ENCODE measurements at regions of chr4 and their contacts with region 1.

Region 1: DNA sequence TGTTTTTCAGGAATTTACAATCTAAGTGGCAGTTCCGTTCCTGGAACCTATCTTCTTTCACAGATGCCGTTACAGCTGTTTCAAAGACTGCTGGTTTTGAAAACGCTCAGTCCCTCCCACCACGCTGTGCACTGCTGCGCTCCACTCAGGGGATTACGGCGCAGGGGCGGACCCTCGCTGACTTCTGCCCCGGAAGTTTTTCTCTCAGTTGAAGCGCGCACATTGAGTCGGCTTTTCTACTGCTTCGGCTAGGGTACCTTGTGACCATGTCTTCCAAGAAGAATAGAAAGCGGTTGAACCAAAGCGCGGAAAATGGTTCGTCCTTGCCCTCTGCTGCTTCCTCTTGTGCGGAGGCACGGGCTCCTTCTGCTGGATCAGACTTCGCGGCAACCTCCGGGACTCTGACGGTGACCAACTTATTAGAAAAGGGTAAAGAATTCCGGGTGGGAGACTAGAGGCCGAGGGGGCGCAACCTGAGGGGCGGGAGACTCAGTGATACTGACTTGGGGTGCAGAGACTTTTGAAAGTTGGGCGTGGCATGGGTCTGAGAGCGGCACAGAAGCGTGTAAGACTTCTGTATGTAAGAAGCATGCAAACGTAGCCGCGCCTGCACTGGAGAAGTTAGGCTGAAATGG is 597 bp upstream of the NUDT6 start:
- DNase-seq: peak; percentile 60 to 87 (median 82)
- ATAC-seq: peak; percentile 98
- H3K4me3 ChIP-seq: peak overlapping the region; percentile 97
- H3K4me3 Mint-ChIP-seq: peak overlapping the region in 6 of 10 donors; percentile 98 to 100 (median 98)
- H3K27ac ChIP-seq: peak overlapping the region; percentile 68
- H3K27ac Mint-ChIP-seq: peak overlapping the region in 8 of 9 donors; percentile 92 to 98 (median 96)
- H3K4me1 ChIP-seq: peaks cover 11 to 12% of the 10 kb centered on the region in 2 donors
- H3K4me1 Mint-ChIP-seq: peaks cover 0 to 33% (median 7%) of the 10 kb centered on the region in 7 donors
- H3K27me3 ChIP-seq: no peaks in the 10 kb centered on the region
- H3K27me3 Mint-ChIP-seq: no peaks in the 10 kb centered on the region

Region 2: GRCh38 chr4:121696581-121697461 is 1226.2 kb before region 1 on chr4 and contains the start of gene ANXA5:
- CTCF ChIA-PET with region 1: no interaction called
- POLR2A ChIA-PET with region 1: no interaction called
- intact Hi-C with region 1: loop called in 1 of 2 experiments (anchors 2 kb)
- DNase-seq: peak; percentile 8 to 85 (median 41)
- ATAC-seq: peak; percentile 92
- H3K4me3 ChIP-seq: peak within 1 kb of the TSS; percentile 87
- H3K4me3 Mint-ChIP-seq: peak within 1 kb of the TSS; percentile 94 to 99 (median 97)
- H3K27ac ChIP-seq: peak within 1 kb of the TSS; percentile 39
- H3K27ac Mint-ChIP-seq: peak within 1 kb of the TSS; percentile 67 to 99 (median 87)
- H3K4me1 ChIP-seq: peaks cover 4 to 13% of the 10 kb centered on the region in 2 donors
- H3K4me1 Mint-ChIP-seq: peaks cover 12 to 43% (median 19%) of the 10 kb centered on the region in 7 donors
- H3K27me3 ChIP-seq: no peaks in the 10 kb centered on the region
- H3K27me3 Mint-ChIP-seq: peaks cover 0 to 43% (median 28%) of the 10 kb centered on the region in 5 donors
- total RNA-seq, gene ANXA5: 25.5 to 180 (median 49.5) TPM

Region 3: GRCh38 chr4:121869841-121870656 is 1052.9 kb before region 1 on chr4 and contains the start of gene BBS7:
- CTCF ChIA-PET with region 1: no interaction called
- POLR2A ChIA-PET with region 1: no interaction called
- intact Hi-C with region 1: loop called in 1 of 2 experiments (anchors 2 kb)
- DNase-seq: peak; percentile 79 to 93 (median 89)
- ATAC-seq: peak; percentile 98
- H3K4me3 ChIP-seq: peak within 1 kb of the TSS; percentile 99
- H3K4me3 Mint-ChIP-seq: peak within 1 kb of the TSS; percentile 88 to 98 (median 97)
- H3K27ac ChIP-seq: peak within 1 kb of the TSS; percentile 77
- H3K27ac Mint-ChIP-seq: peak within 1 kb of the TSS; percentile 69 to 95 (median 90)
- H3K4me1 ChIP-seq: peaks cover 0 to 10% of the 10 kb centered on the region in 2 donors
- H3K4me1 Mint-ChIP-seq: peaks cover 9 to 17% (median 15%) of the 10 kb centered on the region in 7 donors
- H3K27me3 ChIP-seq: no peaks in the 10 kb centered on the region
- H3K27me3 Mint-ChIP-seq: peaks cover 0 to 30% (median 12%) of the 10 kb centered on the region in 5 donors
- total RNA-seq, gene BBS7: 3.7 to 13.1 (median 8.1) TPM

Region 4: DNA sequence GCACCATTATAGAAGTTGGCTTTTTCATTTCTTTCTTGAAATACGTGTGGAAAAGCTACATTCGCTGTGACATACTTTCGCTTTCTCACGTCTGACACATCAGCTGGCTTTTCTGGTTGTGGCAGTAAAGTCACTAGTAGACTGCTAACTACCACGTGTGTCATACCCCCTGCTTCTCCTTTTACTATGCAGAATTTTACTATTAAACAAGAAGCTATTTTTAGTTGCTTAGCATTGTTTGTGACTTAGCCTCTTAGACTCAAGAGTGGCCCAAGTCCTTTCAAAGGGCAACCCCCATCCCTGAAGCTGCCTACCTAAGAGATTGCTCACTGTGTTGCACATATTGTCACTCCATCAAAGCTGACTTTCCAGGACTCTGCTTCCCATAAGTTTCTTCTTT is 464.4 kb before region 1 on chr4:
- CTCF ChIA-PET with region 1: no interaction called
- POLR2A ChIA-PET with region 1: no interaction called
- intact Hi-C with region 1: loop called in 1 of 2 experiments (anchors 10 kb)
- DNase-seq: peak in 6 of 9 donors; percentile 19 to 41 (median 34)
- ATAC-seq: peak; percentile 76
- H3K4me3 ChIP-seq: peak overlapping the region; percentile 33
- H3K4me3 Mint-ChIP-seq: peak overlapping the region; percentile 74 to 91 (median 86)
- H3K27ac ChIP-seq: no peak overlapping the region
- H3K27ac Mint-ChIP-seq: peak overlapping the region; percentile 66 to 86 (median 77)
- H3K4me1 ChIP-seq: peaks cover 25 to 46% of the 10 kb centered on the region in 2 donors
- H3K4me1 Mint-ChIP-seq: peaks cover 20 to 55% (median 50%) of the 10 kb centered on the region in 7 donors
- H3K27me3 ChIP-seq: no peaks in the 10 kb centered on the region
- H3K27me3 Mint-ChIP-seq: no peaks in the 10 kb centered on the region

Region 5: DNA sequence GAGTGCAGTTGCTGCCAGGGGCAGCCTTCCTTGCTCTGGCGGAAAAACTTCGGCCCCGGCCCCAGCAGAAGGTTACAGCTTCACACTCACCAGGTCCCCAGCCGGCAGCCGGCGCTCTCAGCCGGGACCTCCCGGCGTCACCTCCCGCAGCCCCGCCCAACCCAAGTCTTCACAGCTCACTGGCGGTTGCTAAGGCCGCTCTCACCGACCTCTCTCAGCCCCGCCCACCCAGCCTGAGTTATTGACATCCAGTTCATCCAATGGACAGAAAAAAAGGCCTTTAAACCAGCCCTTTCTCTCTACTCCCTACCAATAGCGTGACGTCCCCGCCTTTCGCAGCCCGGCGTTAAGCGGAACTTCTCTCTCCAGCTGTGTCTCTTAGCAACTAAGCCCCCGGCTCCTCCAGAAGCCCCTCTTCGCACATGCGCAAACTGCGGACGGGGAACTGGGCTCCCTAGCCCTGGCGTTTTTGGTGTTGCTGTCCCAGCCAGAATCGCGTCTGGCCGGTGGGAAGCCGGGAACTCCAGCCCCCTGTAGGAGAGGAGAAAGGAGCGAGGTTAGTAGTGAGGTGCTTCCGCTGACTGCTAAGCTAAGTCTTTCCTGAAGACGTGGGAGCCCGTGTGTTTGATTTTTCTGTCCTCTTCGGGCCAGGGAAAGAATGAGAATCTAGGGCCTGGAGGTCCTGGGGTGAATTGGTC is 190.5 kb before region 1 on chr4 and contains the start of gene BBS12:
- CTCF ChIA-PET with region 1: interaction called, 4 read pairs
- POLR2A ChIA-PET with region 1: interaction called, 9 read pairs
- intact Hi-C with region 1: loop called (anchors 1 kb)
- DNase-seq: peak; percentile 90 to 99 (median 99)
- ATAC-seq: peak; percentile 99
- H3K4me3 ChIP-seq: peak within 1 kb of the TSS; percentile 97
- H3K4me3 Mint-ChIP-seq: peak within 1 kb of the TSS; percentile 80 to 100 (median 97)
- H3K27ac ChIP-seq: peak within 1 kb of the TSS; percentile 74
- H3K27ac Mint-ChIP-seq: peak within 1 kb of the TSS; percentile 92 to 99 (median 98)
- H3K4me1 ChIP-seq: peaks cover 9 to 17% of the 10 kb centered on the region in 2 donors
- H3K4me1 Mint-ChIP-seq: peaks cover 6 to 44% (median 36%) of the 10 kb centered on the region in 7 donors
- H3K27me3 ChIP-seq: no peaks in the 10 kb centered on the region
- H3K27me3 Mint-ChIP-seq: no peaks in the 10 kb centered on the region
- total RNA-seq, gene BBS12: 0.71 to 4.3 (median 2.3) TPM

Region 6: DNA sequence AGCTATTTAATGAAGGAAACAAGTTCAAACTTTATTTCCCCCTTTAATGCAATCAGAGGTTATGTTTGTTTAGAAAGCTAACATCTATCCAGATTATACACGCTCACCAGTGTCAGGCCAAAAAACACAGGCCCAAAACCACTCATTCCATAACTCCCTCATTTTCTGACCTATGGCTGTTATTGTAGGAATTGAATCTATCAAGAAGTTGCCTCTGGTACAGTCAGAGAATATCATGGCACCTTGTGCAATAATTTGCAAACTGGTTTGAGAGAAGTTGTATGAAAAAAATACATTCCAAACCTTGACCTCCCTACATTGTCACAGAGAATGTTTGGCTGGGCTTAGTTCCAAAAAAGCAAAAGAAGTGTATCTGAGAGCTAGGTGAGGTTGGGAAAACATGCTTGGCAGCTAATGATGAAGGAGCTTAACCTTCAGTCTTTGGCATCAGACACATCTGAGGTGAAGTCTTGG is 1198.5 kb after region 1 on chr4:
- CTCF ChIA-PET with region 1: no interaction called
- POLR2A ChIA-PET with region 1: no interaction called
- intact Hi-C with region 1: no loop called
- DNase-seq: no peak
- ATAC-seq: no peak
- H3K4me3 ChIP-seq: no peak overlapping the region
- H3K4me3 Mint-ChIP-seq: no peak overlapping the region
- H3K27ac ChIP-seq: no peak overlapping the region
- H3K27ac Mint-ChIP-seq: no peak overlapping the region
- H3K4me1 ChIP-seq: no peaks in the 10 kb centered on the region
- H3K4me1 Mint-ChIP-seq: no peaks in the 10 kb centered on the region
- H3K27me3 ChIP-seq: no peaks in the 10 kb centered on the region
- H3K27me3 Mint-ChIP-seq: no peaks in the 10 kb centered on the region

Region 7: DNA sequence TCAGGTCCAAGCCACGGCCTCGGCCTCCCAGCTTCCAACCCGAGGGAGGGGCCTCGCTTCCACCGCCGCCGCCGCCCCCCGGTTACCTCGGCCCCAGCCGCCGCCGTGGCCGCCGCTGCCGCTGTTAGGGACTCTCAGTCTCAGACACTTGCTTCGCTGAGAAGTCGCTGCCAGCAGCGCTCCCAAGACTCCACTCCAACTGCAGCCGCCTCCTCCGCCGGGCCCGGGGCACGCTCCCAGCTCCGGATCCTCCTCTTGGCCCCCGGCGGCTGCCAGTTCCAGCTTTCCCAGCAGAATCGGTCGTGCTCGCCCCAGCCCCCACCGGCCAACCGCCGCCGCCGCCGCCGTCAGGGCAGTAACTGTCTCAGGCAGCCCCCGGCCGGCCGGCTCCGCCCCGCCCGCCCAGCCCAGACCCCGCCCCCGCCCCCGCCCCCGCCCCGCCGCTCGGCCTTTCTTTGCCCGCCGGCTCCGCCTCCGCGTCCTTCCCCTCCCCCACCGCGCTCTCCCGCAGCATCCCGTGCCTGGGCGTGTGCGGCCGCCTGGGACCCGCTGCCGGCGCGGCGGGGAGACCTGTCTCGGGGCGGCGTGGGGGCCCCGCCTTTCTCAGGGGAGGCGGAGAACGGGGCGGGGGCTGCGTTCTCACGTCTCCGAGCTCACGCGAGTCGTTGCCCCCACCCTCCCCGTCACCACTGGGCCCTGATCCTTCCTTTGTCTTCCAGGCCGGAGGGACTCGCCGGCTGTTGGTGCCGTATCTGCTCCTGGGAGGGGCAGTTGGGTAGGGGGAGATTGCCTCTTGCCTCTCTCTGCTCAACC is 1789.6 kb after region 1 on chr4 and contains the start of gene ANKRD50:
- CTCF ChIA-PET with region 1: no interaction called
- POLR2A ChIA-PET with region 1: no interaction called
- intact Hi-C with region 1: loop called in 1 of 2 experiments (anchors 5 kb)
- DNase-seq: peak; percentile 53 to 75 (median 68)
- ATAC-seq: peak; percentile 84
- H3K4me3 ChIP-seq: peak within 1 kb of the TSS; percentile 57
- H3K4me3 Mint-ChIP-seq: peak within 1 kb of the TSS in 7 of 10 donors; percentile 77 to 94 (median 93)
- H3K27ac ChIP-seq: peak within 1 kb of the TSS; percentile 56
- H3K27ac Mint-ChIP-seq: peak within 1 kb of the TSS in 8 of 9 donors; percentile 47 to 93 (median 84)
- H3K4me1 ChIP-seq: peaks cover 4 to 7% of the 10 kb centered on the region in 2 donors
- H3K4me1 Mint-ChIP-seq: peaks cover 4 to 9% (median 6%) of the 10 kb centered on the region in 7 donors
- H3K27me3 ChIP-seq: no peaks in the 10 kb centered on the region
- H3K27me3 Mint-ChIP-seq: peaks cover 0 to 22% (median 4%) of the 10 kb centered on the region in 5 donors
- total RNA-seq, gene ANKRD50: 0.15 to 3.5 (median 0.65) TPM